ENCODE measurements at regions of chr7 and their contacts with region 1.

Region 1: DNA sequence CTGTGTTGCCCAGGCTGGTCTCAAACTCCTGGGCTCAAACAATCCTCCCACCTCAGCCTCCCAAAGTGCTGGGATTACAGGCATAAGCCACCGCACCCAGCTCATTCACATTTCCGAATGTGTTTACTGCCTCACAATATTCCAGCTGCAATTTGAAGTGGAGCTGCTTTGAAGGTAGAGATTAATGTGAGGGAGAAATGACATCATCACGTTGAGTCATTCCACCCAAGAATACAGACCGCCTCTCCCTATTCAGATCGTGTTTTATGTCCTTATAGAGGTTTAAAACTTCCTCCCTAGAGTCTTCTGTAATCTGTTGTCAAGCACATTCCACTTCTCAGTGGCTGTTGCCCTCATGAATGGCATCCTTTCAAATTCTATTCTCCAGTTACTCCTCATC is 100.4 kb upstream of the PDGFA start:
- DNase-seq: no peak
- H3K4me3 Mint-ChIP-seq: no peak overlapping the region
- H3K27ac Mint-ChIP-seq: peak overlapping the region; percentile 100
- H3K4me1 Mint-ChIP-seq: peaks cover 45% of the 10 kb centered on the region
- H3K27me3 Mint-ChIP-seq: no peaks in the 10 kb centered on the region

Region 2: GRCh38 chr7:518630-519483 is 101.2 kb before region 1 on chr7:
- CTCF ChIA-PET with region 1: no interaction called
- POLR2A ChIA-PET with region 1: no interaction called
- DNase-seq: peak; percentile 27
- H3K4me3 Mint-ChIP-seq: peak overlapping the region; percentile 61
- H3K27ac Mint-ChIP-seq: no peak overlapping the region
- H3K4me1 Mint-ChIP-seq: peaks cover 12% of the 10 kb centered on the region
- H3K27me3 Mint-ChIP-seq: peaks cover 47% of the 10 kb centered on the region

Region 3: DNA sequence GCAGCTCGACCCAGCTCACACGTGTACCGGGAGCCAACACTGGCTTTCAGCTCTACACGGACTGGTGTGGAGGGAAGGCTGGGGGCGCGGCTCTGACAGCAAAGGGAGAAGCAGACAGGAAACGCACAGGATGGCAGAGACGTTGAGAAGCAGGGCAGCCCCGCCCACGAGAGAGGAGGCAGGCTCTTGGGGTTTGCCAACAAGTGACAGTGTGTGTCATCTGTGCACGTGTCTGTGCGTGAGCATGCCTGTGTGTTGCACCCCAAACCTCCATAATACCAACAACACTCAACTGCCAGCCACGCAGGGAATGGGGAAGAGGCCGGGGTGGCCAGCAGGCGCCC is 36.0 kb before region 1 on chr7:
- CTCF ChIA-PET with region 1: interaction called, 4 read pairs
- POLR2A ChIA-PET with region 1: interaction called, 36 read pairs
- DNase-seq: peak; percentile 94
- H3K4me3 Mint-ChIP-seq: peak overlapping the region; percentile 79
- H3K27ac Mint-ChIP-seq: peak overlapping the region; percentile 88
- H3K4me1 Mint-ChIP-seq: peaks cover 38% of the 10 kb centered on the region
- H3K27me3 Mint-ChIP-seq: no peaks in the 10 kb centered on the region

Region 4: GRCh38 chr7:641269-641671 is 21.2 kb after region 1 on chr7:
- CTCF ChIA-PET with region 1: no interaction called
- POLR2A ChIA-PET with region 1: no interaction called
- DNase-seq: no peak
- H3K4me3 Mint-ChIP-seq: no peak overlapping the region
- H3K27ac Mint-ChIP-seq: no peak overlapping the region
- H3K4me1 Mint-ChIP-seq: peaks cover 15% of the 10 kb centered on the region
- H3K27me3 Mint-ChIP-seq: no peaks in the 10 kb centered on the region

Region 5: GRCh38 chr7:726084-726853 is 106.2 kb after region 1 on chr7 and contains the start of gene DNAAF5:
- CTCF ChIA-PET with region 1: no interaction called
- POLR2A ChIA-PET with region 1: interaction called, 10 read pairs
- DNase-seq: peak; percentile 89
- H3K4me3 Mint-ChIP-seq: peak within 1 kb of the TSS; percentile 83
- H3K27ac Mint-ChIP-seq: peak within 1 kb of the TSS; percentile 71
- H3K4me1 Mint-ChIP-seq: peaks cover 27% of the 10 kb centered on the region
- H3K27me3 Mint-ChIP-seq: no peaks in the 10 kb centered on the region
- total RNA-seq, gene DNAAF5: 16.8 to 19.7 TPM

Measured in activated CD4-positive, alpha-beta memory T cell treated with anti-CD3 and anti-CD28 coated beads, Interleukin-2, amount 10 ng/mL, durations not matched to agents 7 days and 5 days (primary cell).